MCF 10A (cell line): ENCODE measurements at regions of chr17 and their contacts with region 1.

Region 1: DNA sequence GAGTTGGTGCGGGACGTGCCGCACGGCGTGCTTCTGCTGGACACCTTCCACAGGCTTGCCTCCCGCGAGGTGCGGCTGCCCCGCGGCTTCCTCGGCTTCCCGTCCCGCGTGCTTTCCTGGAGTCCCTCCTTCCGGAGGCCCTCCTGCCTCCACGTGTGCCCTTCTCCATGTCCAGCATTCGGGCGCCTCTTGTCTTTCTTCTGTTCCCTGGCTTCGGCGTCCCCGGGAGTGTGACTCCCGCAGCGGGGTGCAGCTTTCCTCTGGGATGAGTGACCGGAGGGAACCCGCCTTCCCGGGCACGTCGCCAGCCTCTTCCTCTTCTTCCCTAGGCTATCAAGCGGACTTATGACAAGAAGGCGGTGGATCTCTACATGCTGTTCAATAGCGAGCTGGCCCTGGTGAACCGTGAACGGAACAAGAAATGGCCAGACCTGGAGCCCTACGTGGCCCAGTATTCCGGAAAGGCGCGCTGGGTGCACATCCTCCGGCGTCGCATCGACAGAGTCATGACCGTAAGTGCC is 23.0 kb downstream of the DNAH2 start:
- DNase-seq: no peak
- H3K4me3 Mint-ChIP-seq: peak overlapping the region; percentile 67
- H3K27ac Mint-ChIP-seq: peak overlapping the region; percentile 43
- H3K4me1 Mint-ChIP-seq: peaks cover 6% of the 10 kb centered on the region
- H3K27me3 Mint-ChIP-seq: peaks cover 56% of the 10 kb centered on the region
- CTCF ChIP-seq: no peak

Region 2: DNA sequence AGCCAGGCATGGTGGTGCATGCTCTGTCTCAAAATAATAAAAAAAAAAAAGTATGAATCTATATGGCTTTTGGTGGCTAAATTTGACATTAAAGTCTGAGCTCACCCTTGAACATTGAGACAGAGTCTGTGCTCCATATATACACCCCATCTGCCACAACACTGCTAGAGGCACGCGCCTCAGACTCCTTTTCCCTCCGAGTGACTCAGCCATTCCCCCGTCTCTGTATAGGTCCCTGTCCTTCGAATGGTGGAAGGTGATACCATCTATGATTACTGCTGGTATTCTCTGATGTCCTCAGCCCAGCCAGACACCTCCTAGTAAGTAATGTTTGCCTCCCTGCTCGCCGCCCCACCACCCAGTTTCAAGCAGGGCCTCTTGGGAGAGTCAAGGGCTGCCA is 40.0 kb before region 1 on chr17:
- CTCF ChIA-PET with region 1: no interaction called
- POLR2A ChIA-PET with region 1: no interaction called
- intact Hi-C with region 1: no loop called
- DNase-seq: no peak
- H3K4me3 Mint-ChIP-seq: no peak overlapping the region
- H3K27ac Mint-ChIP-seq: no peak overlapping the region
- H3K4me1 Mint-ChIP-seq: peaks cover under 1% of the 10 kb centered on the region
- H3K27me3 Mint-ChIP-seq: peaks cover 5% of the 10 kb centered on the region
- CTCF ChIP-seq: no peak

Region 3: DNA sequence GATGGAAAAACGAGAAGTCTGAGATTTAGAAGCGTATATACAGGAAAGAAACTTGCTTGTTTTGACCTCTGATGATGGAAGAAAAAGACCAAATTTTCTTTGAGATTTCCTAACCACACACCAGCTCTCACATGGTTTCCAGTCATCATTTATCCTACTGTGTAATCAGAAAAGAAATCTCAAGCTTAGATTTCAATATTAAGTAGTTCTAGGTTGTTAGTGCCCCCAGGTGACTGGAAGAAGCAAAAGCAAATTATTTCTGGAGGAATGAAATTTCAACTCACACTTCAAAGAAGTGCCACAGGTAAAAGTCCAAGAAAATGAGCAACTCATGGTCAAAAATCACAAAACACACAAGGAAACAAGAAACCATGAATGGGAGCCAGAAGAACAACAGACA is 41.7 kb after region 1 on chr17:
- CTCF ChIA-PET with region 1: interaction called, 32 read pairs
- POLR2A ChIA-PET with region 1: interaction called, 3 read pairs
- intact Hi-C with region 1: loop called (anchors 1 kb)
- DNase-seq: peak; percentile 32
- H3K4me3 Mint-ChIP-seq: no peak overlapping the region
- H3K27ac Mint-ChIP-seq: no peak overlapping the region
- H3K4me1 Mint-ChIP-seq: peaks cover 6% of the 10 kb centered on the region
- H3K27me3 Mint-ChIP-seq: no peaks in the 10 kb centered on the region
- CTCF ChIP-seq: peak; percentile 23

Region 4: GRCh38 chr17:7818746-7819645 is 78.5 kb after region 1 on chr17:
- CTCF ChIA-PET with region 1: interaction called, 26 read pairs
- POLR2A ChIA-PET with region 1: interaction called, 5 read pairs
- intact Hi-C with region 1: loop called (anchors 1 kb)
- DNase-seq: no peak
- H3K4me3 Mint-ChIP-seq: no peak overlapping the region
- H3K27ac Mint-ChIP-seq: no peak overlapping the region
- H3K4me1 Mint-ChIP-seq: peaks cover 5% of the 10 kb centered on the region
- H3K27me3 Mint-ChIP-seq: no peaks in the 10 kb centered on the region
- CTCF ChIP-seq: no peak

Region 5: GRCh38 chr17:7851438-7852256 is 111.1 kb after region 1 on chr17:
- CTCF ChIA-PET with region 1: interaction called, 7 read pairs
- POLR2A ChIA-PET with region 1: interaction called, 9 read pairs
- intact Hi-C with region 1: loop called (anchors 1 kb)
- DNase-seq: peak; percentile 85
- H3K4me3 Mint-ChIP-seq: no peak overlapping the region
- H3K27ac Mint-ChIP-seq: peak overlapping the region; percentile 16
- H3K4me1 Mint-ChIP-seq: peaks cover 7% of the 10 kb centered on the region
- H3K27me3 Mint-ChIP-seq: no peaks in the 10 kb centered on the region
- CTCF ChIP-seq: peak; percentile 91

Region 6: DNA sequence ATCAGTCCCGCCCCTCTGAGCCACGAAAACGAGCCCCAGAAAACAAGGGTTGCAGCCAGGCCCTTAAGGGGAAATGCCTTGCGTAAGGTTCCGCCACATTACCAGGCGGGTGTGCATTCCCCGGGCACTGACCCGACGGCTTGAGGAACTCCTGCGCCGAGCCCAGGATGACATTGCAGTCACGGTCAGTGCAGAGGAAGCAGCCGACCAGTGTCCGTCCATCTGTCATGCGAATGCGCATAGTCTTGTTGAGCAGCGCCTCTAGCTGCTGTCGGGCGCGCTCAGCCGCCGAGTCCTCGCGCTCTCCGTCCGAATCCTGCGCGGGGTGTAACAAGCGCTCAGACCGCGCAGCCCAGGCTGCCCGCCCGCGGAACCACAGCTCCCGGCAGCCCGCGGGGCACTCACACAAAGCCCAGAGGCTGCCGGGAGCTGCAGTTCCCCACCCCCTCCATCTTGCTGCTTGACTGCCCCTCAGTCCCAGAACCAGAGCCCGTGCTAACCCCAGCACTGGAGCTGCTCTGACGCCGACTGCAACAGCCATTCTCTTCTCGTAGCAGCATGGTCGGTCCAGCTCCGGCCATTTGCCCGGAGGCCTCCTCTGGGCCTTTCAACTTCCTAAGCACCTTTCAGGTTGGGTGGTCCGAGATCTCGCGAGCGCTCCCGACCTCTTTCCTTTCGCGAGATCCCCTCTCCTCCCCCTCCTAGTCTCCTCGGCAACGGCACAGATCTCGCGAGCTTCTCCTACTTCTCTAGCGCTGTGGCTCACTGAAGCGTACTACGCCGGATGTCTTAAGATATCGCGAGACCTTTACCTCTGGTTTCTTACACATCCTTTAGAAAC is 116.6 kb after region 1 on chr17 and contains the start of gene NAA38:
- CTCF ChIA-PET with region 1: interaction called, 7 read pairs
- POLR2A ChIA-PET with region 1: interaction called, 9 read pairs
- intact Hi-C with region 1: loop called (anchors 1 kb)
- DNase-seq: peak; percentile 99
- H3K4me3 Mint-ChIP-seq: no peak within 1 kb of the TSS
- H3K27ac Mint-ChIP-seq: no peak within 1 kb of the TSS
- H3K4me1 Mint-ChIP-seq: peaks cover 7% of the 10 kb centered on the region
- H3K27me3 Mint-ChIP-seq: no peaks in the 10 kb centered on the region
- CTCF ChIP-seq: peak; percentile 22
- total RNA-seq, gene NAA38: 70.2 and 83.4 TPM in 2 replicates